ENCODE measurements at regions of chr4 and their contacts with region 1.

Region 1: GRCh38 chr4:82462415-82462831 is 32.0 kb downstream of the ENOPH1 start:
- DNase-seq: peak; percentile 88 to 95 (median 92)
- ATAC-seq: peak; percentile 95
- H3K4me3 ChIP-seq: no peak overlapping the region
- H3K27ac ChIP-seq: peak overlapping the region in 1 of 4 donors; percentile 26
- H3K4me1 ChIP-seq: no peaks in the 10 kb centered on the region
- H3K27me3 ChIP-seq: no peaks in the 10 kb centered on the region
- CTCF ChIP-seq: peak; percentile 60 to 91 (median 81)
- POLR2A ChIP-seq: no peak

Region 2: DNA sequence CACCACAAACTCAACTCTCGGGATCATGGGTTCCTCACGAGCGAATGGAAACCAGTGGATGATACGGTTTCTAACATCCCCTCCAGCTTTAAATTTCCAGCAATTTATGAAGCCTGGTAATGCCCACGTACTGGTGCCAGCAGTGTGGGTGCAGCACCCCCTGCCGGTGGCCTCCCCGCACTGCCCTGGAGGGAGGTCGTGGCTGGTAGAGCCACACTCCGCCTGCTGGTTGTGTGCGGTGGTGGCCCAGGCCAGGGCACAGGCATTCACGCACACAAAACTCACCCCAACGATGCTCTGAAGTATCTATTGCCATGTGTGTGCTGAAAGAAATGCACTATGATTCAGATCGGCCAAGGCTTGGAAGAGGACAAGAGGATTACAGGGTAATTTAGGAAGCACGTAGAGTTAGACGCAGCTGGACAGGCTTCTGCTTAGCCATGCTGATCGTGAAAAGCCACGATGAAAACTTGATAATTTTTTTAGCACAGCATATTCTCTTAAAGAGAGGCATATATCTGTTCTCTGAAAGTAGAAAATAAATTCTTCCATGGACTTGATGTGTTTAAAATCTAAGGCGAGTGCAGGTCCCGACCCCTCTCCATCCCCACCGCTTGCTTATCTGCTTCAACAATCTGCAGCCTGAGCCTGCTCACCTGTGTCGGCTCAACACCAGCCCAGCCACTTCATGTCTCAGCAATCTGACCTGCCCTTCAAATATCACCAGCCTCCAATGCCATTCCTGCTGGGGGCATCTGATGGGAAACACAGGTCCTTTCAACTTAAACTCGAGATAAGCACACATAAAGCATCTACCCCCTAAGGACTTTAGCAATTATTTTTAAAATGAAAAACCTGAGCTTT is 277.1 kb after region 1 on chr4:
- intact Hi-C with region 1: loop called (anchors 10 kb)
- DNase-seq: peak; percentile 77 to 89 (median 86)
- ATAC-seq: peak; percentile 88
- H3K4me3 ChIP-seq: no peak overlapping the region
- H3K27ac ChIP-seq: peak overlapping the region in 2 of 4 donors; percentile 15 to 29
- H3K4me1 ChIP-seq: peaks cover 34% of the 10 kb centered on the region
- H3K27me3 ChIP-seq: no peaks in the 10 kb centered on the region
- CTCF ChIP-seq: peak; percentile 94 to 100 (median 99)
- POLR2A ChIP-seq: no peak

Measured in body of pancreas (tissue), 4 donors.